Right cardiac atrium (tissue), 5 donors: ENCODE measurements at regions of chr19 and their contacts with region 1.

Region 1: DNA sequence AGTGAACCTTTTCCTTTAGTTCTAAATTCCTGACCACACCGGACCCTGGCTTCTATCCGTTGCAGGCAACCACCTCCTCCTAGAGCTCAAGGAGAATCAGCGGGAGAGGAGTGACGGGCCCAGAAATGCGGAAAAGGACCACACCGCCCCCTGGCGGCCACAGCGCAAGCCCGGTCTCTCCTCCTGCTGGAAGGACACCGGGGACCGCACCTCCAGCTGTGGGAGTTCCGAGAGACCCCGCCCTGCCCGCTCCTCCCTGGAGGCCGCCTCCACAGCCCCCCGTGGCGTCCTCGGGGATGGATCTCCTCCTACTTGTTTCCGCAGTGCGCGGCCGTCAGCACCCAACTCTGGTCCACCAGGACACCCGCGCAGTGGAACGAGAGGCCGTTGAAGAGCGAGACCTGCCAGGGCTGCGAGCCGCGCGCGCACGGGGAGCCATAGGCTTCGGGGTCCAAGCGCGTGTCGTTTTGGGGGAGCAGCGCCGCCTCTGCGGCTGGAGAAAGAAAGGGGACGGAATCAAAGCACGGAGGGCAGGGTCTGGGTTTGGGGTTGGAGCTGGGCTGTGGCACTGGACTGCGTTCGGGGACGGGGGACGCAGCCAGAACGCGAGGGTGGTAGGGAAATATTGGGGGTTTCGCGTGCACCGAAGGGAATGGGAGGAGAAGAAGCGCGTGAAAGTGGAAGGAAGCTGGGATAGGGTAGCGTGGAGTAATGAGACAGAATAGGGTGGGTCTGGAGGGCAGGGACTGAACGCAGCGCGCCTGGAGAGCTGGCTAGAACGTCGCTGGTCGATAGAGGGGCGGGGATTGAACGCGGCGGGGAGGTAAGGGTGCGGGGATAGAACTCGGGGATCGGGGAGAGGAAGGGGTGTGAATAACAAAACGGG is 2.5 kb downstream of the KLK10 start:
- DNase-seq: peak; percentile 36 to 84 (median 73)
- ATAC-seq: peak; percentile 13 to 46
- H3K4me3 ChIP-seq: no peak overlapping the region
- H3K27ac ChIP-seq: no peak overlapping the region
- H3K4me1 ChIP-seq: peaks cover 4% of the 10 kb centered on the region
- H3K27me3 ChIP-seq: no peaks in the 10 kb centered on the region

Region 2: DNA sequence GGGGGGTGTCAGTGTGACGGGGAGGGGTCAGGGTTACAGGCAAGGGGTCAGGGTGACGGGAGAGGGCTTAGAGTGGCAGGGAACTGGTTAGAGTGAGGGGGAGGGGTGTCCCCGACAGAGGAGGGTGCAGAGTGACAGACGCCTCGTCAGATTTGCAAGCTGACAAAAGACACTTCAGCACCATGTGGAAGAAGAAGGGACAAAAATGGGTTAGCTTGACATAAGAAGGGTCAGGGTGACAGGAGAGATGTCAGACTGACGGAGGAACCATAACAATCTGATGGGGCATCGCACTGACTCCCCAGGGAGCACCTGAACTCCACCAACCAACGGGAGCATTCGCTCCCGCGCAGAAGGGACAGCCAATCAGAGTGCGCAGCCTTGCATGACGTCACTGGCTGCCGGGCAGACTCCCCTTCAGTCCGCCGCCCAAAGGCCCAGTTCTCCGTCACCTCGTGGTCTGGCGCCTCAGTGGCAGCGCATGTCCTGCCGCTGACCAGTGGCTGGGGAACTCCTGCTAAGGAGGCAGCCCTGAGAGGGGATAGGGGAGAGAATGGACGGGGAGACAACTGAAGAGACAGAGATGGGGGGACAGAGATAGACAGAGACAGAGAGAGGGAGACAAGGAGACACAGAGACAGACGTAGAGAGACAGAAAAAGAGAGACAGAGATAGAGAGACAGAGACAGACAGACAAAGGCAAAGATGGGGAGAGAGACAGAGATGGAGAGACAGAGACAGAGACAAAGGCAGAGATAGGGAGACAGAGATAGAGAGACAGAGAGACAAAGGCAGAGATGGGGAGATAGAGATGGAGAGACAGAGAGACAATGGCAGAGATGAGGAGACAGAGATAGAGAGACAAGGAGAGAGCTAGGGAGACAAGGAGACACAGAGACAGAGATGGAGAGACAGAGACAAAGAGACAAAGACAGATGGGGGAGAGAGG is 337.6 kb before region 1 on chr19:
- intact Hi-C with region 1: no loop called
- DNase-seq: peak; percentile 76 to 91 (median 91)
- ATAC-seq: peak; percentile 92 to 96
- H3K4me3 ChIP-seq: no peak overlapping the region
- H3K27ac ChIP-seq: no peak overlapping the region
- H3K4me1 ChIP-seq: no peaks in the 10 kb centered on the region
- H3K27me3 ChIP-seq: no peaks in the 10 kb centered on the region

Region 3: DNA sequence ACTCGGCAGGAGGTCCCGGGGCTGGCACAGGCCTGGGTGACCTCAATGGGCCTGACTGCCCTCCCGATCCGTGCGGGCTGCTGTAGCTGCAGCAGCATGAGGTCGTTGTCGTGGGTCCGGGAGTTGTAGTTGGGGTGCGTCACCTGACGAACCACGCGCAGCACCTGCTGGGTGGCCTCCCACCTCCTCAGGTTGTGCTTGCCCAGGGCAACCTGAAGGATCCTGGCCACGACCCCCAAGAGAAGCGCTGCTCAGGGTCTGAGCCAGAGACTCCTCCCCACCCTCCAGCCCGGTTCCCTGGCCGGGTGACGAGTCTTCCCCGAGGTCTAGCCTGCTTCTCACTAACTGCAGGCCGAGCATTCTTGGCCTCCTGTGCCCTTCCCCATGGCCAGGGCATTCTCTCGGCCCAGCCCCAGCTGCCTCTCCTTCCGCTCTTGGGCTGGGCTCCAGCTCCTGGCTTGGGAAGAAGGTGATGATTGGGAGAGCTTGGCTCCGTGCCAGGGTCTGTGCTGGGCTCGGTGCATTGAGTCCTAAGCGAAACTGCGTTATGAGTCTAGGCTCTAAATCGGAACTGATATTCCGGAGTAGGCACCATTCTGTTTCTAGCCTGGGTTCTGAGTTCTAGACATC is 62.6 kb after region 1 on chr19:
- intact Hi-C with region 1: no loop called
- DNase-seq: peak; percentile 64 to 87 (median 75)
- ATAC-seq: peak; percentile 59 to 61
- H3K4me3 ChIP-seq: no peak overlapping the region
- H3K27ac ChIP-seq: no peak overlapping the region
- H3K4me1 ChIP-seq: no peaks in the 10 kb centered on the region
- H3K27me3 ChIP-seq: no peaks in the 10 kb centered on the region

Region 4: GRCh38 chr19:51166846-51167490 is 149.9 kb after region 1 on chr19:
- intact Hi-C with region 1: loop called in 1 of 4 experiments (anchors 10 kb)
- DNase-seq: no peak
- ATAC-seq: peak; percentile 40 to 49
- H3K4me3 ChIP-seq: no peak overlapping the region
- H3K27ac ChIP-seq: no peak overlapping the region
- H3K4me1 ChIP-seq: peaks cover 2% of the 10 kb centered on the region
- H3K27me3 ChIP-seq: no peaks in the 10 kb centered on the region